SK-N-SH (cell line): ENCODE measurements at regions of chr16 and their contacts with region 1.

Region 1: DNA sequence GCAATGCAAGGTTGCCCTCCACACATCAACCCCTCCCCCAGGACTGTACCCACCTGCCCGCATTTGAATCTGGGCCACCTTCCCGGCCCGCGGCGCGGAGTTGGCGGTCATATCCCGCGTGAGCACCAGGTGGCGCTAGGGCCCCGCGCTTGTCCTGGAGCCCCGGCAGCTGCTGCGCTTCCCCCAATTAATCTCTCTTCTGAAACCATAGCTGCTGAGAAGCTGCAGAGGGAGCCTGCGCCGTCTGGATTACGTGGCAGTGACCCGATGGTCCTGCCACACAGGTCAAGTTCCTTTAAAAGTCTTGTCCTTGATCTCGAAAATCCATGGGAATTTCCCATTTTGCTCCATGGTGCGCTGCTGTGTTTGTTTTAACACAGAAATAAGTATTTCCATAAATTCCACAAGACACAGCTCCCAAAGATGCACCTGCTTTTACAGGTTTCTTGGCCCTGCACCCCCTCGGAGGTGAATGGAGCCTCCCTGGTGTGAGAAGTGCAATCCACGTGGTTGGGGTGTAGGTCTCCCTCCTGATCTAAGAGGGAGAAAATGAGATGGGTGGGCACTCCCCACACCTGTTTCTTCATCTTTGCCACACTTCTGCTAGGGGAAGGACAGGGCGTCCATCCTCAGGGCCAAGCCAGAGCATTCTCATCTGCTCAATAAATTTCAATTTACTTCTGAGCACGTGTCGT is 22.1 kb downstream of the COX4I1 start:
- DNase-seq: peak; percentile 91
- H3K4me3 ChIP-seq: peak overlapping the region in 1 of 2 experiments; percentile 25; a peak in 1 of 4 replicates
- H3K27ac ChIP-seq: no peak overlapping the region
- H3K4me1 ChIP-seq: no peaks in the 10 kb centered on the region
- H3K27me3 ChIP-seq: peaks cover 52% of the 10 kb centered on the region
- CTCF ChIP-seq: peak; percentile 89
- EP300 ChIP-seq: no peak
- RAD21 ChIP-seq: peak; percentile 91

Region 2: DNA sequence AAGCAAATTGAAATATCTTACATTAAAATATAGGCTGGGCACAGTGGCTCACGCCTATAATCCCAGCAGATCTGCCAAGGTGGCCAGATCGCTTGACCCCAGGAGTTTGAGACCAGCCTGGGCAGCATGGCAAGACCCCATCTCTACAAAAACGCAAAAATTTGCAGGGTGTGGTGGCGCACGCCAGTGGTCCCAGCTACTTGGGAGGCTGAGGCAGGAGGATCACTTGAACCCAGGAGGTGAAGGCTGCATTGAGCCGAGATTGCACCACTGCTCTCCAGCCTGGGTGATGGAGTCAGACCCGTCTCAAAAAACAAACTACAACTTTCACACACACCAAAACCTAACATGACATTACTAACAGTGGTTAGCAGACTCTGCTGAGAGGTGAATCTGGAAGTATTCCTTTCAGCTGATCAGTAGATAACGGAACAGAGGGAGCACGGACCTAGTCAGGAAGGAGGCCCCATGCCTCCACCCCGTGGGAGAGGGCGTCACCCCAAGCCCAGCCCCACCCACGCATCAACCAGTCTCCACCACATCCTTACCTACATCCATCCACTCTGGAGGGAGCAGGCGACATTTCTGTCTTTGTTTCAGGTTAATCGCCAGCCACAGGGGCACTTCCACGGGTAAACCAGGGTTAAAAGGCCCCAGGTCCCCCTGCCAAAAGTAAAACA is 134.5 kb before region 1 on chr16:
- CTCF ChIA-PET with region 1: no interaction called
- POLR2A ChIA-PET with region 1: no interaction called
- DNase-seq: no peak
- H3K4me3 ChIP-seq: no peak overlapping the region
- H3K27ac ChIP-seq: no peak overlapping the region
- H3K4me1 ChIP-seq: peaks cover 0 to 13% of the 10 kb centered on the region in 2 experiments; a peak in 1 of 4 replicates
- H3K27me3 ChIP-seq: no peaks in the 10 kb centered on the region
- CTCF ChIP-seq: no peak
- EP300 ChIP-seq: no peak
- RAD21 ChIP-seq: no peak

Region 3: GRCh38 chr16:85746008-85746781 is 75.4 kb before region 1 on chr16:
- CTCF ChIA-PET with region 1: no interaction called
- POLR2A ChIA-PET with region 1: no interaction called
- DNase-seq: no peak
- H3K4me3 ChIP-seq: no peak overlapping the region
- H3K27ac ChIP-seq: no peak overlapping the region
- H3K4me1 ChIP-seq: peaks cover 8 to 9% of the 10 kb centered on the region in 2 experiments; a peak in 2 of 4 replicates
- H3K27me3 ChIP-seq: no peaks in the 10 kb centered on the region
- CTCF ChIP-seq: no peak
- EP300 ChIP-seq: no peak
- RAD21 ChIP-seq: no peak

Region 4: DNA sequence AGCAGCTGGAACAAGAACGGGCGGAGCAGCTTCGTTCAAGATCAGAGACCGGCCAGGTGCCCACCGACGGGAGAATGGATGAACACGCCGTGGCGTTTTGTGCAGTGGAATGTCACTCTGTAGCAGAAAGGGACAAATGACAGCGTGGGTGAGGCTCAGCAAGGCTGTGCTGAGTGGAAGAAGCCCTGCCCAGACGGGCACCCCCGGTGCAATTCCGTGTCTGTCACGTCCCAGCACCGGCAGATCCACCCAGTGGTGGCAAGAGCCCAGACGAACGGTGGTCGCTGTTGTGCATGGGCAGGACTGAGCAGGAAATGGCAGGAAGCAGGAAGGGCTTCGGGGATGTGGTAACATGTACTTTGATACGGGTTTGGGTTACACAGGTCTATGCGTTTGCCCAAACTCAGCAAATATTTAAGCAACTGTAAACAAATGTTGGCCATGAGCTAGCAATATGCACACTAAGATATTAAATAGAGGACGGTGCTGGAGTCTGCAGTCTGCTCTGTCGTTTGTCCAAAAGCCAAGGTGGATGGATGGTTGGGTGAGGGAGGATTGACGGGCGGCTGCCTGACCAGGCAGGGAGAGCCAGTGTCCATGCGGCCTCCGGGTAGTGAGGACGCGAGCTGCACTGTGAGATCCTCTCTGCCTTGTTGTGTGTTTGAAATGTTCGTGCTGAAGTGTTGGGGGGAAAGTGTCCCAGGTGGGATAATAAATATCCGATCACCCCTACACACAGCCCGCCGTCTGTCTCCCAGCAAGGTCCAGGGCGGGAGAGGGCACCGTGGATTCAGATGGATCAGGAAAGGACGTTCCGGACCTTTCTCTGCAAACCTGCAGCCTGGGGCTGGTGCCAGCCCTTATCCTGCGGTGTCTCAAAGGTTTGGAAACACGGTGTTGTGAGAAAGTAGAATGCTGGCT is 26.4 kb after region 1 on chr16:
- CTCF ChIA-PET with region 1: interaction called, 12 read pairs
- POLR2A ChIA-PET with region 1: no interaction called
- DNase-seq: no peak
- H3K4me3 ChIP-seq: no peak overlapping the region
- H3K27ac ChIP-seq: no peak overlapping the region
- H3K4me1 ChIP-seq: no peaks in the 10 kb centered on the region
- H3K27me3 ChIP-seq: peaks cover 89% of the 10 kb centered on the region
- CTCF ChIP-seq: no peak
- EP300 ChIP-seq: no peak
- RAD21 ChIP-seq: no peak

Region 5: GRCh38 chr16:85916141-85916890 is 94.7 kb after region 1 on chr16:
- CTCF ChIA-PET with region 1: interaction called, 11 read pairs
- POLR2A ChIA-PET with region 1: no interaction called
- DNase-seq: no peak
- H3K4me3 ChIP-seq: no peak overlapping the region
- H3K27ac ChIP-seq: no peak overlapping the region
- H3K4me1 ChIP-seq: no peaks in the 10 kb centered on the region
- H3K27me3 ChIP-seq: peaks cover 97% of the 10 kb centered on the region
- CTCF ChIP-seq: no peak
- EP300 ChIP-seq: no peak
- RAD21 ChIP-seq: no peak

Region 6: DNA sequence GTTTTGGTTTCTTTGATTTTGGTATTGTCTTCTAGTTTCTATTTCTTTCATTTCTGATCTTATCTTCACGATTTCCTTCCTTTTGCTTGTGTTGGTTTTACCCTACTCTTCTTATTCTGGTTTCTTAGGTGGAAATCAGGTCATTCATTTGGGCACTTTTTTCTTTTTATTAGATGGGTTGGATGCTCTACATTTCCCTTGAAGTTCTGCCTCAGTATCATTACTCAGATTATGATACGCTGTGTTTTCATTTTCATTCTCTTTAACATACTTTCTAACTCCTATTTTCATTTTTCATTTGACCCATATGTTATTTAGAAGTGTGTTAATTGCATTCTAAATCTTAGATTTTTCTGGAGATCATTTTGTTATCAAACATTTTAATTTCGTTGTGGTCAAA is 185.9 kb after region 1 on chr16:
- CTCF ChIA-PET with region 1: interaction called, 41 read pairs
- POLR2A ChIA-PET with region 1: no interaction called
- DNase-seq: no peak
- H3K4me3 ChIP-seq: no peak overlapping the region
- H3K27ac ChIP-seq: no peak overlapping the region
- H3K4me1 ChIP-seq: no peaks in the 10 kb centered on the region
- H3K27me3 ChIP-seq: peaks cover 51% of the 10 kb centered on the region
- CTCF ChIP-seq: no peak
- EP300 ChIP-seq: no peak
- RAD21 ChIP-seq: no peak

Region 7: DNA sequence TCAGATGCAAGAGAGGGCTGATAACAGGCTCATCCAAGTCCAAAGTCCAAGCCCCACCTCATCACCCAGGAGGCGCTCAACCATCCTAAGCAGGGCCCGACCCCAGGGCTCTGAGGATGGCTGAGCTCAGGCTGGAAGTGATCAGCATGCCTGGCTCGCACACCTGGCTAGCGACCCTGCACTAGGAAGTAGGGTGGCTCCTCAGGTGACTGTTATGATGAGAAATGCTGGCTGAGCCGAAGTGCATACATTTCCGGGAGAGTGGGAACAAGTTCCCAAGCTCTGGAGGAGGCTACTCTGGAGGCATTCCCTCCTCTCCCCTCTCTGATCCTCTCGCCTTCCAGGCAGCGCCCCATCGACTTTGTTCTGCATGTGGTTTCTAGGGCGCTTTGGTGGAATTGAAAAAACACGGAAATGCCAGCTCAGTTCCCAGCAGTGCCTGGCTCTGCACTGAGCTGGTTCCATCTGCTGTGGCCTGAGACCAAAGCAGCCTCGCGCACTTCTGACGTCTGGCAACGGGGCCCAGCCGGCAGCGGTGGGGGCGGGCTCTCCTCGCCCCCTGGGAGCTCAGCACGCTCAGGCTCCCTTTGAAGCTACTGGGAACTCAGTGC is 207.6 kb after region 1 on chr16:
- CTCF ChIA-PET with region 1: interaction called, 14 read pairs
- POLR2A ChIA-PET with region 1: no interaction called
- DNase-seq: no peak
- H3K4me3 ChIP-seq: no peak overlapping the region
- H3K27ac ChIP-seq: no peak overlapping the region
- H3K4me1 ChIP-seq: no peaks in the 10 kb centered on the region
- H3K27me3 ChIP-seq: peaks cover 68% of the 10 kb centered on the region
- CTCF ChIP-seq: no peak
- EP300 ChIP-seq: no peak
- RAD21 ChIP-seq: no peak